ENCODE measurements at regions of chr19 and their contacts with region 1.

Region 1: GRCh38 chr19:5271141-5271540 is 69.5 kb downstream of the PTPRS start:
- DNase-seq: no peak
- ATAC-seq: peak; percentile 86
- H3K4me3 ChIP-seq: no peak overlapping the region
- H3K27ac ChIP-seq: no peak overlapping the region
- H3K4me1 ChIP-seq: no peaks in the 10 kb centered on the region
- H3K27me3 ChIP-seq: no peaks in the 10 kb centered on the region
- CTCF ChIP-seq: peak in 1 of 3 experiments; percentile 21; a peak in 2 of 6 replicates
- EP300 ChIP-seq: no peak
- POLR2A ChIP-seq: no peak
- RAD21 ChIP-seq: 0 out of 2 replicates have a peak, but pooled peaks have one; percentile 26

Region 2: DNA sequence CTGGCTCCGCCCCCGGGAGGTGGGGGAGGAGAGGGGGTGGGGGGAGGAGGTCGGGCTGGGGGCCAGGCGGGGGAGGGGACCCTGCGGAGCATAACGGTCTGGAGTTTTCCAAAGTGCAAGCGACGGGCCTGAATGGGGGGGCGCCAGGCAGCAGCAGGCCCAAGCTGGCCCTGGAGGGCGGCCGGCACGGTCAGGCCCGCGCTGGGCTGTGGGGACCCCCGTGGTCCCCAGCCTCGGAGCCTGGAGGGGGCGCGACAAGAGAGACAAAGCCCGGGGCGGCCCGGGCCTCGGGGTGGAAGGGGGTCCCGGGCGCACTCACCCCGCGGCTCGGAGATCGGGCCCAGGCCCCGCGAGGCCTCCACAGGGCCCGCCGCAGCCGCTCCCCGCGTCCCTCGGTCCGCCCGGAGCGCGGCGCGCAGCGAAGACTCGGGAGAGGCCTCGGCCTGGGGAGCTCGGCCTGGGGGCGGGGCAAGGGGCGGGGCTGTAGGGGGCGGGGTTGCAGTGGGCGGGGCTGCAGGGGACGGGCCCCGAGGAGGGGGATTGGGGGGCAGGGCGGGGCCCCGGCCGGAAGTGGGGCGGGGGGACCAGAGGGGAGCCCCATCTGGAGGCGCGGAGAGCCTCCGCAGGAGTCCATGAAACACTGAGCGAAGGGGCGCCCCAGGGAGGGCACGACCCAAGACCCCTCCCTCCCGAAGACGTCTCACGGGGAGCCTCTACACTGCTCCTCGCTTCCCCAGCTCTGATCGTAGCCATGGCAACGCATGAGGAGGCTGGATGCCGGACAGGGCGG is 21.9 kb after region 1 on chr19:
- CTCF ChIA-PET with region 1: interaction called, 4 read pairs
- POLR2A ChIA-PET with region 1: interaction called, 6 read pairs
- RAD21 ChIA-PET with region 1: interaction called, 5 read pairs
- SMC1A ChIA-PET with region 1: interaction called, 11 read pairs
- in situ Hi-C with region 1: no loop called
- intact Hi-C with region 1: no loop called
- DNase-seq: no peak
- ATAC-seq: peak; percentile 80
- H3K4me3 ChIP-seq: no peak overlapping the region
- H3K27ac ChIP-seq: no peak overlapping the region
- H3K4me1 ChIP-seq: peaks cover 12% of the 10 kb centered on the region
- H3K27me3 ChIP-seq: peaks cover 0 to 4% of the 10 kb centered on the region in 2 experiments; a peak in 2 of 4 replicates
- CTCF ChIP-seq: no peak
- EP300 ChIP-seq: no peak
- POLR2A ChIP-seq: no peak
- RAD21 ChIP-seq: no peak

Region 3: GRCh38 chr19:5524081-5524480 is 252.9 kb after region 1 on chr19:
- CTCF ChIA-PET with region 1: no interaction called
- POLR2A ChIA-PET with region 1: no interaction called
- RAD21 ChIA-PET with region 1: no interaction called
- SMC1A ChIA-PET with region 1: no interaction called
- in situ Hi-C with region 1: no loop called
- intact Hi-C with region 1: no loop called
- DNase-seq: no peak
- ATAC-seq: no peak
- H3K4me3 ChIP-seq: no peak overlapping the region
- H3K27ac ChIP-seq: no peak overlapping the region
- H3K4me1 ChIP-seq: no peaks in the 10 kb centered on the region
- H3K27me3 ChIP-seq: no peaks in the 10 kb centered on the region
- CTCF ChIP-seq: no peak
- EP300 ChIP-seq: no peak
- POLR2A ChIP-seq: no peak
- RAD21 ChIP-seq: no peak